ENCODE measurements at regions of chr12 and their contacts with region 1.

Region 1: DNA sequence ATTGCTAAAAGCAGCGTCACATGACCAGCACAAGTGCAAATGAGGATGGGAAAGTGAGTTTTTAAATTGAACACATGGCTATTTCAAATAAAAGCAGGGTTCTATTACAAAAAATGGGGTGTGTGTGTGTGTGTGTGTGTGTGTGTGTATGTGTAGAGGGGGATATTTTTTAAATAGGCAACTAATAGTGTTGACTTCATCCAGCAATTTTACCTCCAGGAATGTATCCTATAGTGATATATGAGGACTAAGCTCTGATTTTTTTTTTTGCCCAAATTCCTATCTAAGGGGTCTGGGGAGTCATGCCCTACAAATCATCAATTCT is 78.9 kb upstream of the AMN1 start:
- DNase-seq: no peak
- H3K4me3 ChIP-seq: no peak overlapping the region
- H3K27ac ChIP-seq: no peak overlapping the region
- H3K4me1 ChIP-seq: no peaks in the 10 kb centered on the region
- H3K27me3 ChIP-seq: no peaks in the 10 kb centered on the region
- CTCF ChIP-seq: no peak
- POLR2A ChIP-seq: no peak

Region 2: DNA sequence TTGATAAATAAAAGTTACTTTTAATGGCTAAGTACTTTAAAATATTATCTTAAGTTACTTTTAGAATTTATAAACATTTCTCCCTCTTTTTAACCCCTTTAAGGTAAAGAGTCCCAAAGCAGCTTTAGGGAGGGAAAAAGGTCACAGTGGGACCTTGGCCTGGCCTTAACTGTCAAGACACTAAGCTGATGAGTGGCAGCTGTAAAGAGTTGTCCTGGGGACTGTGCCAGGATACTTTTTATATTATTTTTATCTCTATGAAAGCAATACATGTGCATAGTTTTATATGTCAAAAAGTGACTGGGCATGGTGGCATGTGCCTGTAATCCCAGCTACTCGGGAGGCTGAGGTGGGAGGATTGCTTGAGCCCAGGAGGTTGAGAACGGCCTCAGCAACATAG is 57.3 kb after region 1 on chr12:
- intact Hi-C with region 1: loop called (anchors 2 kb)
- DNase-seq: no peak
- H3K4me3 ChIP-seq: no peak overlapping the region
- H3K27ac ChIP-seq: no peak overlapping the region
- H3K4me1 ChIP-seq: no peaks in the 10 kb centered on the region
- H3K27me3 ChIP-seq: no peaks in the 10 kb centered on the region
- CTCF ChIP-seq: no peak
- POLR2A ChIP-seq: no peak

Region 3: DNA sequence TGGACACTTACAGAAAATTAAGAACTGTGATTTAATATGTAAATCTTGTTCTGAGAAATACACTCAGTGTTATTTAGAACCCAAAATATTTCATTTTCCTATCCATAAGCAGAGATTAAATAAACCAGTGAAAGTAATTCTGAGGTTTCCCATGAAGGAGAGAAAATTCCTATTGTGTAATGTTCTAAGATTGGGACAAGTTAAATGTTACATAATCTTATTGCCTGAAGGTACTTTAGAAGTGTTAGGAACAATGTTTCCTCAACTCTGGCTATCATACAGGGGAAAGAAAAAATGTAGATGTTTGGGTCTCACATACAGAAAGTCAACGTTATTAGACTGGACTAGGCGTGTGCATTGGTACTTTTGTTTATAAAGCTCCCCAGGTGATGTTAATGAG is 1913.8 kb after region 1 on chr12:
- intact Hi-C with region 1: no loop called
- DNase-seq: no peak
- H3K4me3 ChIP-seq: no peak overlapping the region
- H3K27ac ChIP-seq: no peak overlapping the region
- H3K4me1 ChIP-seq: no peaks in the 10 kb centered on the region
- H3K27me3 ChIP-seq: no peaks in the 10 kb centered on the region
- CTCF ChIP-seq: no peak
- POLR2A ChIP-seq: no peak

Measured in breast epithelium (tissue), 4 donors.